ENCODE measurements at regions of chr13 and their contacts with region 1.

Region 1: GRCh38 chr13:44648392-44649103 is 72.4 kb upstream of the TSC22D1 start:
- DNase-seq: no peak
- H3K4me3 Mint-ChIP-seq: no peak overlapping the region
- H3K27ac Mint-ChIP-seq: peak overlapping the region; percentile 37
- H3K4me1 Mint-ChIP-seq: peaks cover 21% of the 10 kb centered on the region
- H3K27me3 Mint-ChIP-seq: peaks cover 9% of the 10 kb centered on the region

Region 2: DNA sequence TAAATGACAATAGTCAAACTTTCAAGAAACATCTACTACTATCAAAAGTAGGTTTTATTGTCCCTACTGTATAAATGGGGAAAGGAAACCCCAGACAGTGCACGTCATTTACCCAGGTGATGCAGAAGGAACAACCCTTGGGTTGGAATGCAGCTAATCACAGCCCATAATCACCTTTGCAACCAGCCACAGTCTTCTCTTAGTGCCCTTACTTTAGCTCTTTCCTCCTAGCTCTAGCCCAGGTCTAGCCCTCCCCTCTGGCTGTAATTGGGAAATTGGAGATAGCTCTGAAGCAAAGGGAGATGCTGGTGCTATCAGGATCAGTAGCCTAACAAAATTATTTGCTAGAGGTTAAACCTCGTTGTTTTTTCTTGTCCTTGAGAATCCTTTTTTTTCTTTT is 47.0 kb before region 1 on chr13:
- intact Hi-C with region 1: no loop called
- DNase-seq: no peak
- H3K4me3 Mint-ChIP-seq: no peak overlapping the region
- H3K27ac Mint-ChIP-seq: no peak overlapping the region
- H3K4me1 Mint-ChIP-seq: no peaks in the 10 kb centered on the region
- H3K27me3 Mint-ChIP-seq: peaks cover 5% of the 10 kb centered on the region

Region 3: GRCh38 chr13:44710576-44710975 is 62.0 kb after region 1 on chr13:
- intact Hi-C with region 1: loop called (anchors 1 kb)
- DNase-seq: no peak
- H3K4me3 Mint-ChIP-seq: no peak overlapping the region
- H3K27ac Mint-ChIP-seq: no peak overlapping the region
- H3K4me1 Mint-ChIP-seq: peaks cover 18% of the 10 kb centered on the region
- H3K27me3 Mint-ChIP-seq: peaks cover 26% of the 10 kb centered on the region

Region 4: GRCh38 chr13:44758630-44759383 is 110.3 kb after region 1 on chr13:
- intact Hi-C with region 1: loop called (anchors 1 kb)
- DNase-seq: no peak
- H3K4me3 Mint-ChIP-seq: no peak overlapping the region
- H3K27ac Mint-ChIP-seq: peak overlapping the region; percentile 79
- H3K4me1 Mint-ChIP-seq: peaks cover 32% of the 10 kb centered on the region
- H3K27me3 Mint-ChIP-seq: peaks cover 2% of the 10 kb centered on the region

Region 5: DNA sequence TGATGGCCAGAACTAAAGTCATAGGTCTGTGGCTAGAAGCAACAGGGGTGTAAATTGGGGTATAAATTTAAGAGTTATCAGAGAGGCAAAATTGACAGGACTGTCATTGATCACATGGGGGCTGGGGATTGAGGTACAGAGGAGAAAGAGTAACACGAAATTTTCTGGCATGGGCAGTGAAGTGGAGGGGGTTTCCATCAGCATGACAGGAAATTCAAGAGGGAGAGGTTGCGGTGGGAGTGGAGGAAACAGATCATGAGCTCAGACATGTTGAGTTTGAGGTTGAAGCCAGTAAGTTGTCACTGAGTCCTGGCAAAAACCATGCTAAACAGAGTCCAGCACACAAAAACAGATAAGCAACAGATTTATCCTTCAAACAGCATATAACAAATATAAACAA is 119.7 kb after region 1 on chr13:
- intact Hi-C with region 1: loop called (anchors 1 kb)
- DNase-seq: peak; percentile 63
- H3K4me3 Mint-ChIP-seq: peak overlapping the region; percentile 41
- H3K27ac Mint-ChIP-seq: peak overlapping the region; percentile 82
- H3K4me1 Mint-ChIP-seq: peaks cover 56% of the 10 kb centered on the region
- H3K27me3 Mint-ChIP-seq: no peaks in the 10 kb centered on the region

Region 6: DNA sequence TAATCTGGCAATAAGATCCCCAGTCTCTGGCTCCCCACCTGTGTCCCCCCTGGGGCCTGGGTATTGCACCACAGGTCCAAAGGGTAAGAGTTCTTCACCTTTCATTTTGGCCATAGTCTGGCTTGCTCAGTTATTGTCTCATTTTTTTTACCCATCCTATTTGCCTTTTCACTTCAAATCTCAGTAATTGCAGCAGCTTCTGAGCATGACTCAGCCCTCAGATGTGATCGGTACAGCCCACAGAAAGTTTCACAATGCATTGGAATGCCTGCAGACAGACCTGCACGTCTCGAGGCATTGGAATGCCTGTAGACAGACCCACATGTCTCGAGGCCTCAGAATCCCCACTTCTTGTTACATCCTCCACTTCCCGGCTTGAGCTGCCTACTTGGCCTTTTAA is 167.1 kb after region 1 on chr13:
- intact Hi-C with region 1: loop called (anchors 1 kb)
- DNase-seq: peak; percentile 10
- H3K4me3 Mint-ChIP-seq: no peak overlapping the region
- H3K27ac Mint-ChIP-seq: peak overlapping the region; percentile 8
- H3K4me1 Mint-ChIP-seq: peaks cover 29% of the 10 kb centered on the region
- H3K27me3 Mint-ChIP-seq: peaks cover 12% of the 10 kb centered on the region

Region 7: GRCh38 chr13:44868397-44868796 is 219.8 kb after region 1 on chr13:
- intact Hi-C with region 1: loop called (anchors 2 kb)
- DNase-seq: no peak
- H3K4me3 Mint-ChIP-seq: no peak overlapping the region
- H3K27ac Mint-ChIP-seq: no peak overlapping the region
- H3K4me1 Mint-ChIP-seq: peaks cover 9% of the 10 kb centered on the region
- H3K27me3 Mint-ChIP-seq: peaks cover 7% of the 10 kb centered on the region

Region 8: GRCh38 chr13:44879463-44880058 is 231.0 kb after region 1 on chr13:
- intact Hi-C with region 1: loop called (anchors 2 kb)
- DNase-seq: no peak
- H3K4me3 Mint-ChIP-seq: no peak overlapping the region
- H3K27ac Mint-ChIP-seq: no peak overlapping the region
- H3K4me1 Mint-ChIP-seq: peaks cover 11% of the 10 kb centered on the region
- H3K27me3 Mint-ChIP-seq: no peaks in the 10 kb centered on the region

Measured in activated T-helper 1 cell treated with anti-CD3 and anti-CD28 coated beads, Interleukin-12 subunit alpha, Interleukin-12 subunit beta, Interleukin-2, Interleukin-4 antibody, amounts not matched to agents 30 ng/mL and 10 ng/mL and 1 ng/mL, durations not matched to agents 14 hours and 24 hours and 36 hours (primary cell).